HAP-1 (cell line): ENCODE measurements at regions of chr7 and their contacts with region 1.

Region 1: GRCh38 chr7:67267914-67268313 is 271.3 kb downstream of the TYW1 start:
- DNase-seq: no peak
- H3K4me3 ChIP-seq: no peak overlapping the region
- H3K4me1 ChIP-seq: no peaks in the 10 kb centered on the region
- H3K27me3 ChIP-seq: no peaks in the 10 kb centered on the region

Region 2: DNA sequence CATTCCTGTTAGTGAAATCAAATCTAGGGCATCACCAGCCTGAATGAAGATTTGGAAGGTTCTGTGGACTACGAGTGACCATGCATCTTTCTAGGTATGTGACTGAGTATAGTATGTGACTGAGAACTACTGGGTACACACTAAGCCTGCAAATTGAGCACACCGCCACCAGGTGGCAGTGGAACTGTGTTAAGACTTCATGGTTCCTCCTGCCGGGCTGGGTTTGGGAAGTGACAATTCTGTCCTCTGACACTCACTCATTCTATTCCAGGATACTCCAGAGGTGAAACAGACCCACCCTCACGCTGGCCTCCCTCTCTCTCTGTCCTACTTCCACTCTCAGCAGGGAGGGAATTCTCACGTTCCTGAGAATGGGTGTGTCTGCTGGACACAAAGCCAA is 430.9 kb before region 1 on chr7:
- in situ Hi-C with region 1: no loop called
- DNase-seq: peak in 1 of 2 experiments; percentile 37
- H3K4me3 ChIP-seq: no peak overlapping the region
- H3K4me1 ChIP-seq: no peaks in the 10 kb centered on the region
- H3K27me3 ChIP-seq: no peaks in the 10 kb centered on the region

Region 3: DNA sequence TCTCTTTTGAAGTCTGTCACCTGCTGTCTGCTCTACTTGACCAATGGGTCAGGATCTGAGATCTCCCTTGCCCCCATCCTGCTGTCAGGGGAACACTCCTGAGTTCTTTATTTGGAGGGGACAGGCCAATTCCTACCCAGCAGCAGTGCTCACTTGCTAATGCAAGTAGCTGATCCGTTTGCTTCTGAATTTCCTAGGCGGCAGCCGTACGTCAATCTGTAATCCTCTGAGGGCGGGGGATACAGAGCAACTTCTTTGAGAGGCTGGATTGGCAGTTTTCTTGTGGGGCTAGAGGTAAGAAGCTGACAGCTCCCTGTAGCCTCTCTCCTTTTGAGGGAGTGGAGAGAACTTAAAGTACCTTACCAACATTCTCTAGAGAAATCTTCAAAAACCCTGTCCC is 234.7 kb before region 1 on chr7:
- in situ Hi-C with region 1: loop called (anchors 25 kb)
- DNase-seq: no peak
- H3K4me3 ChIP-seq: no peak overlapping the region
- H3K4me1 ChIP-seq: no peaks in the 10 kb centered on the region
- H3K27me3 ChIP-seq: no peaks in the 10 kb centered on the region

Region 4: GRCh38 chr7:67593794-67594193 is 325.9 kb after region 1 on chr7:
- in situ Hi-C with region 1: no loop called
- DNase-seq: no peak
- H3K4me3 ChIP-seq: no peak overlapping the region
- H3K4me1 ChIP-seq: no peaks in the 10 kb centered on the region
- H3K27me3 ChIP-seq: no peaks in the 10 kb centered on the region